ENCODE measurements at regions of chr17 and their contacts with region 1.

Region 1: GRCh38 chr17:2929881-2930533 is 133.4 kb downstream of the OR1D5 start:
- DNase-seq: peak; percentile 71 to 83
- ATAC-seq: peak; percentile 90 to 92
- H3K4me3 ChIP-seq: no peak overlapping the region
- H3K27ac ChIP-seq: peak overlapping the region; percentile 63 to 67; a peak in 5 of 6 replicates
- H3K4me1 ChIP-seq: peaks cover 32% of the 10 kb centered on the region
- CTCF ChIP-seq: peak; percentile 89
- EP300 ChIP-seq: no peak
- POLR2A ChIP-seq: no peak
- RAD21 ChIP-seq: peak; percentile 85 to 91

Region 2: DNA sequence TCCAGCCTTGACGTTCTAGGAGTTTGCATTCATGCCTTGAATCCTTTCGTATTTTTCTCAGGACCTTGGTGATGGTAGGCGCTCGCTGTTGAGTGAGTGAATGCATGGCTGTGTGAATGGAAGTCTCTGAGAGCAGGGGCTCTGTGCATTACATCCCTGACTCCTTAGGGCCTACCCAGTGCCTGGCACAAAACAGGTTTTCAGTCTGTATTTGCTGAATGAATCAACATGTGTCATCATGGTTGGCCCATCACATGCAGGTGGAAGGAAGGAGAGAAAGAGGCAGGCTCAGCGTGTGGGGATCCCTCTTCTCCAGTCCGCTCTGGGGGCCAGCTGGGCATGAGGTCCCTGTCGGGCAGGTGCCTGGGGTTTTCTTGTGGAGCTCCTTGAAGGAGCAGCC is 125.1 kb before region 1 on chr17:
- CTCF ChIA-PET with region 1: no interaction called
- POLR2A ChIA-PET with region 1: no interaction called
- DNase-seq: no peak
- ATAC-seq: no peak; a peak in 1 of 6 replicates
- H3K4me3 ChIP-seq: no peak overlapping the region
- H3K27ac ChIP-seq: peak overlapping the region in 1 of 2 experiments; percentile 35; a peak in 1 of 6 replicates
- H3K4me1 ChIP-seq: peaks cover 3% of the 10 kb centered on the region; the same call in 1 of the 3 replicates
- CTCF ChIP-seq: no peak
- EP300 ChIP-seq: no peak
- POLR2A ChIP-seq: no peak
- RAD21 ChIP-seq: no peak

Region 3: GRCh38 chr17:2837147-2837561 is 92.9 kb before region 1 on chr17:
- CTCF ChIA-PET with region 1: interaction called, 10 read pairs
- POLR2A ChIA-PET with region 1: no interaction called
- DNase-seq: no peak
- ATAC-seq: peak in 1 of 2 experiments; percentile 66; a peak in 2 of 6 replicates
- H3K4me3 ChIP-seq: no peak overlapping the region
- H3K27ac ChIP-seq: no peak overlapping the region
- H3K4me1 ChIP-seq: peaks cover 13% of the 10 kb centered on the region; the same call in 1 of the 3 replicates
- CTCF ChIP-seq: no peak
- EP300 ChIP-seq: no peak
- POLR2A ChIP-seq: no peak
- RAD21 ChIP-seq: peak in 1 of 2 experiments; percentile 36; a peak in 2 of 5 replicates

Region 4: GRCh38 chr17:2904152-2904551 is 25.9 kb before region 1 on chr17:
- CTCF ChIA-PET with region 1: interaction called, 15 read pairs
- POLR2A ChIA-PET with region 1: no interaction called
- DNase-seq: no peak
- ATAC-seq: peak; percentile 5 to 18; a peak in 3 of 6 replicates
- H3K4me3 ChIP-seq: no peak overlapping the region
- H3K27ac ChIP-seq: 0 out of 6 replicates have a peak overlapping the region, but pooled peaks of 1 of the 2 experiments have one; percentile 23
- H3K4me1 ChIP-seq: peaks cover 5% of the 10 kb centered on the region; the same call in 1 of the 3 replicates
- CTCF ChIP-seq: no peak
- EP300 ChIP-seq: no peak
- POLR2A ChIP-seq: no peak
- RAD21 ChIP-seq: no peak

Region 5: DNA sequence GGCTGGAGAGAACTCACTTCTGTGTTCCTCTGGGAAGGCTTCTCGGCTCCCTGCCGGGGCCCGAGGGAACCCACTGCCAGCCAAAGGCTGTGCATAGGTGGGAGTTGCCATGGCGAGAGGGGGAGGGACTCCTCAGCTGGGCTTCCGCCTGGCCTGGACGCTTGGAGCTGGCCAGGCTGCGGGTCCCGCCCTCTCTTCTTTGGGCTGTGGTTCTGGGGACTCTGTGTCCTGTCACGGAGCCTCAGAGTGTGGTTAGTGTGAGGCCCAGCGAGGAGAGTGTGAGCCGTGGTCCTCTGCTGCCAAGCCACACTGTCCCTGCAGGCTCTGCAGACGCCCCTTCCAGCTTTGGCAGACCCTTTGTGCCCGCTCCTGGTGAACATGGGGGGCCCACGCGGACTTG is 10.3 kb after region 1 on chr17:
- CTCF ChIA-PET with region 1: interaction called, 15 read pairs
- POLR2A ChIA-PET with region 1: no interaction called
- DNase-seq: no peak
- ATAC-seq: peak in 1 of 2 experiments; percentile 21; a peak in 2 of 6 replicates
- H3K4me3 ChIP-seq: no peak overlapping the region
- H3K27ac ChIP-seq: peak overlapping the region; percentile 12 to 45; a peak in 4 of 6 replicates
- H3K4me1 ChIP-seq: peaks cover 12% of the 10 kb centered on the region
- CTCF ChIP-seq: no peak
- EP300 ChIP-seq: no peak
- POLR2A ChIP-seq: no peak
- RAD21 ChIP-seq: no peak

Measured in A549 (cell line).